ENCODE measurements at regions of chr10 and their contacts with region 1.

Region 1: DNA sequence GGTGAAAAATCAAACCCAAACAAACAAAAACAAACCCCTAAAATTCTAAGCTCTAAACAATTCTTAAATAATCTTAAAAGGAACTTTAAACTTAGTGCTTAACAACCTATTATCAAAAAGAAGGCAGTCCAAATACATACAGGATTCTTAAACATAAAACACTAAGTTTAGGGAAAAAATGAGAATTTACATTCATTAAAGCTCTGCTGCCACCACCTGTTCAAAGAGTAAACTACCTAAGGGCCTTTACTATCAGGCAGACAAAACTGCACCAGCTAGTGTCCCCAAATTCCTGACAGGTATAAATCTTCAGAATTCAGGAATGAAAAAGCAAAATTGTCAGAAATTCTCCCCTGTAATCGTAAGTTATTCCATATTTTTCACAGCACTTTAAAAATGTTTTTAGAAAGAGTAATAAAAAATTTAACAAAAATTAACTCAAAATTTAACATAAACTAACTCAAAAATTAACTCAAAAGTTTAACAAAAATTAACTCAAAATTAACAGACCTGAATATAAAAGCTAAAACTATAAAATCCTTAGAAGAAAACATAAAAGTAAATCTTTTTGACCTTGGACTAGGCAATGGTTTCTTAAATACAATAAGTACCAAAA is 55.1 kb downstream of the PDZD8 start:
- DNase-seq: no peak
- ATAC-seq: no peak
- H3K4me3 Mint-ChIP-seq: no peak overlapping the region
- H3K27ac Mint-ChIP-seq: no peak overlapping the region
- H3K4me1 Mint-ChIP-seq: no peaks in the 10 kb centered on the region
- H3K27me3 Mint-ChIP-seq: no peaks in the 10 kb centered on the region

Region 2: DNA sequence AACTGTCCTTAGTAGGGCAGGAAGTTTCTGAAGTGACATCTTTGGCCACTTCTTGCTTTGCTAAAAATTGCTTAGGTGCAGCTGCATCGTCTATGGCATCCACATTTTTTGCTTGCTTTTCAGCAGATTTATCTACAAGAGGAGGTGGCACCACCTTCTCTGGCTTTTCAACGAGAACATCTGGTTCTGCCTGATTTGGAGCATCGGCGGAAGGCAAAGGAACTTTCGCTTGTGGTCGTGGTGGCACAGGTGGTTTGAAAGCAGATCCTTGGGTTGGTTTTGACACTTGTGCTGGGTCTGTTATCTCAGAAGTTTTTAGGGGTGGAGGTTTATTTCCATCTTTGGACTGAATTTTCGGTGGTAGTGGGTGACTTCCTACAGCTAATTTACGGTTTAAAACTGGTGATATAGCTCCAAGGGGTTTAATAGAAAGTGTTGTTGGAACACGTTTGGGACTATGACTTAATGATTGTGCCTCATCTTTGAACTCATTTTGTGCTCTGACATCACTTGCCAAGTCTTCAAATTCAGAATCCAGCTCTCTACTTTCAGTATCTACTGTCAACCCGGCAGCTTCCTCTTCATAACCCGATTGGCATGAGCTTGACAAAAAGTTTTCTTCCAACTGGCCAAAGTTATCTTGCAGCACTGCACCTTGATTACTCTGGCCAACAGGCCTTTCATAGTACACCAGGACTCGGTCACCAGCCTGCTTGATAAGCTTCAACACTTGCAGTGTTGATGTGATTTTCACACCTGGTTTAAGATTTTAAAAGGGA is 35.3 kb before region 1 on chr10:
- CTCF ChIA-PET with region 1: interaction called, 20 read pairs
- POLR2A ChIA-PET with region 1: no interaction called
- DNase-seq: no peak
- ATAC-seq: no peak
- H3K4me3 Mint-ChIP-seq: no peak overlapping the region
- H3K27ac Mint-ChIP-seq: no peak overlapping the region
- H3K4me1 Mint-ChIP-seq: peaks cover 8% of the 10 kb centered on the region
- H3K27me3 Mint-ChIP-seq: no peaks in the 10 kb centered on the region

Region 3: GRCh38 chr10:117334066-117334465 is 13.9 kb after region 1 on chr10:
- CTCF ChIA-PET with region 1: interaction called, 20 read pairs
- POLR2A ChIA-PET with region 1: no interaction called
- DNase-seq: no peak
- ATAC-seq: no peak
- H3K4me3 Mint-ChIP-seq: no peak overlapping the region
- H3K27ac Mint-ChIP-seq: no peak overlapping the region
- H3K4me1 Mint-ChIP-seq: no peaks in the 10 kb centered on the region
- H3K27me3 Mint-ChIP-seq: no peaks in the 10 kb centered on the region

Region 4: DNA sequence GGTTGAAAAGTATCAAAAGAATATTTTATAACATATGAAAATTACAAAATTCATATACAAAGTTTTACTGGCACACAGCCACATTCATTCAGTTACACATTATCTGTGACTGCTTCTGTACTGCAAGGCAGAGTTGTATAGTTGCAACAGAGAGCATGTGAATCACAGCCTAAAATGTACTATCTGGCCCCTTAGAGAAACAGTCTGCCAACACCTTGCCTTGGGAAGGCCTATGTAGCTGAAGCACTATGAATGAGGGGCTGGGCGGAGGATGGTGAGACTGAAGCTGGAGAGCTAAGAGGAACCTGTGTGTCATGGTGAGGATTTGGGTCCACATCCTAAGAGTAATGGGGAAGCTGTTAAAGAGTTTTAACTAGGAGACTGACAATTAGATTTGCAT is 19.4 kb after region 1 on chr10:
- CTCF ChIA-PET with region 1: interaction called, 20 read pairs
- POLR2A ChIA-PET with region 1: no interaction called
- DNase-seq: no peak
- ATAC-seq: no peak
- H3K4me3 Mint-ChIP-seq: no peak overlapping the region
- H3K27ac Mint-ChIP-seq: no peak overlapping the region
- H3K4me1 Mint-ChIP-seq: peaks cover 15% of the 10 kb centered on the region
- H3K27me3 Mint-ChIP-seq: no peaks in the 10 kb centered on the region

Region 5: DNA sequence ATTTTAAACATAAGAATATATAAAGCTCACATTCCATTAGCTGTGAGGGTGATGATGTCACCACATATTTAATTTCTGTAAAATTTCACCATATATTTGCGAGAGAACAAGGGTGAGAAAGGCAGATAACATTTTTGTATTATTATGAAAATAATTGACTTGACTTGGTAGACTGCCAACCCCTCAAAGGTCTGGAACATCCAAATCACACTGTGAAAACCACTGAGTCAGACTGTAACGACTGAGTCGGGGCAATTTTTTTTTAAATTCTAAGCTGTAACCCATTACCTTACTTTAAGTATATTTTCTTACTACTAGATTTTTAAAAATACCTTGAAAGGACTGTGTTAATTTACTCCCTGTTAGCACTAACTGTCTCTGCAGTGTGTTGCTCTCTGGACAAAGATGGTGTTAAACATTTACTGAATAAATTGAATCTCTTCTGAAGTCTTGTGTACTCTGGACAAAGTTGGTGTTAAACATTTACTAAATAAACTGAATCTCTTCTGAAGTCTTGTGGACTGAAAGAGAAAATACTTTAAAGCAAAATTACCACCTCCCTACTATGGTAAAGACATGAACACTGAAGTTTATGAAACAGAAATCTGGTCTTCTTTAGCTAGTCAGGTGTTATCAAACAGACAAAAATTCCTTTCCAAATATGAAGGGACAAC is 41.0 kb after region 1 on chr10:
- CTCF ChIA-PET with region 1: interaction called, 13 read pairs
- POLR2A ChIA-PET with region 1: no interaction called
- DNase-seq: no peak
- ATAC-seq: no peak
- H3K4me3 Mint-ChIP-seq: no peak overlapping the region
- H3K27ac Mint-ChIP-seq: no peak overlapping the region
- H3K4me1 Mint-ChIP-seq: peaks cover 22% of the 10 kb centered on the region
- H3K27me3 Mint-ChIP-seq: no peaks in the 10 kb centered on the region

Region 6: GRCh38 chr10:117413928-117414618 is 93.9 kb after region 1 on chr10:
- CTCF ChIA-PET with region 1: no interaction called
- POLR2A ChIA-PET with region 1: no interaction called
- DNase-seq: no peak
- ATAC-seq: no peak
- H3K4me3 Mint-ChIP-seq: no peak overlapping the region
- H3K27ac Mint-ChIP-seq: no peak overlapping the region
- H3K4me1 Mint-ChIP-seq: no peaks in the 10 kb centered on the region
- H3K27me3 Mint-ChIP-seq: peaks cover 16% of the 10 kb centered on the region

Measured in activated CD8-positive, alpha-beta T cell treated with anti-CD3 and anti-CD28 coated beads, Interleukin-2, amount 10 ng/mL, durations not matched to agents 7 days and 5 days (primary cell).